Prostate gland (tissue), 2 donors: ENCODE measurements at regions of chr7 and their contacts with region 1.

Region 1: DNA sequence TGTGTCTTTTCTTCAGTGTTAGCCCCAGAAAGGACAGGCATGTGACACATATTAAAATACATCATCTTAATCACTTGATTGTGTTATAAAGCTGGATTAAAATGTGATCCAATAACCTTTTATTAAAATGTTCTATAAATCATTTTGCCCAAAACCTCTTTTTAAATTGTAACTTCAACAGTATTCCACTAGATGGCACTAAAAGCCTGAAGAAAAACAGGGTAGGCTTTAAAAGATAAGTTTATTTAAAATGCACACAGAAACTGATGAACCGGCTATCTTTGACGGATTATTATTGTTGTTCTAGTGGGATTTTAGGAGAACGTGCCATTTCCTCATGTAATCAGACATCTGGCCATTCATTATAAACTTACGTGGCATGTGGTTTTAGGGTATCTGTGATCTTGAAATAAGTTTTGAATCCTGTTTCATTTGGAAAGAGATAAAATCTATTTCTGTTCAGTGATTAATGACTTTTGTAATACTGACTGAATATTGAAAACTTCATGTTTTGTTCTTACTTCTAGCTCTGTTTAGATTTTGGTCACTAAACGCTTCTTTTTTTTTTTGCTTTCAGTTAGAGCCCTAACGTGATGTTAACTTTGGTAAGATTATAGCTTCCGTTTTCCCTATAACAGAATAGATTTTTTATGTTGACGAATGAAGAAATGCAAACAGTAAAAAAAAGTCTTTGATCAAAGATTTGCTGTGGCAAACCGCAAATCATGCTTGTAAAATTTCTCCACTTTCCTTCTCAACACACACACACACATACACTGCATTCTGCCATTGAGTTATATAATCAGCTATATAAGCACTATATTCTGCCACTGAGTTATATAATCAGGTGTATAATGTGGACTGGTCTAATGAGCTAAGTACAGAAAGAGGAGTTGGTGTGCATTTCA is 13.6 kb downstream of the VPS50 start:
- DNase-seq: no peak
- H3K4me3 ChIP-seq: peak overlapping the region in 1 of 2 donors; percentile 14
- H3K27ac ChIP-seq: no peak overlapping the region
- H3K4me1 ChIP-seq: no peaks in the 10 kb centered on the region
- H3K27me3 ChIP-seq: no peaks in the 10 kb centered on the region
- CTCF ChIP-seq: peak; percentile 34 to 75 (median 66)
- POLR2A ChIP-seq: no peak

Region 2: GRCh38 chr7:93551063-93551904 is 305.5 kb after region 1 on chr7:
- intact Hi-C with region 1: loop called (anchors 5 kb)
- DNase-seq: no peak
- H3K4me3 ChIP-seq: no peak overlapping the region
- H3K27ac ChIP-seq: no peak overlapping the region
- H3K4me1 ChIP-seq: no peaks in the 10 kb centered on the region
- H3K27me3 ChIP-seq: no peaks in the 10 kb centered on the region
- CTCF ChIP-seq: peak in 1 of 4 experiments; percentile 22
- POLR2A ChIP-seq: no peak

Region 3: DNA sequence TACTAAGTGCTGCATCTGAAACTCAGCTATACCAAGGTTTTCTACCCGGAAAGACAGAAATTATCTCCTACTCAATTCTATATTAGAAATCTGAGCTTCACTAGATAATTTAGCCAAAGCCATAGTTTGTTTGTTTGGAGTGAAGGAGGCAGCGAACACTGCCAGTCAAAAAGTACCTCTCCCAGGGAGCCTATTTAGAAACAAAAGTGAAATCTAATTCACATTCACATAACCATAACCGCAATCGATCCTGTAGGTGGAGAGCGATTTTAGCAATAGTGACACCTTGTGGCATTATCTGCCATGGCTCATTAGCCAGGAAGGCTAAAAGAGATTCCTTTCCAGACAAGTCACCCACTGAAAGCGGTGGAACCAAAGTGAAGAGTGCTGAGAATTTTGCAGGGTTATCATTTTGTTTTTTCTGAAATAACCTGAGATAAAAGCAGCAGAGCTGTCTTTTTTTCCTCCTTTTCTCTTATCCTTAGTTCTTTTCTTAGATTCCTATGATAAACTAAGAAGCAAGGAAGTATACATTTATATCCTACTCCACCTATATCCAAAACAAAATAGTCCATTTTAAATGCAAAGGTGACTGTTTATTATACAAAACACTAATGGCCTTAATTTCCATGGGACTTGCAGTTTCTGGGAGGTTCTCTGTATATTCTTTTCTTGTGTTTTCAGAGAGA is 842.0 kb after region 1 on chr7:
- intact Hi-C with region 1: loop called (anchors 10 kb)
- DNase-seq: peak; percentile 36
- H3K4me3 ChIP-seq: no peak overlapping the region
- H3K27ac ChIP-seq: no peak overlapping the region
- H3K4me1 ChIP-seq: no peaks in the 10 kb centered on the region
- H3K27me3 ChIP-seq: no peaks in the 10 kb centered on the region
- CTCF ChIP-seq: peak in 3 of 4 experiments; percentile 67 to 75 (median 67)
- POLR2A ChIP-seq: no peak